Activated naive CD4-positive, alpha-beta T cell treated with anti-CD3 and anti-CD28 coated beads, Interleukin-2, amount 10 ng/mL, durations not matched to agents 7 days and 5 days (primary cell): ENCODE measurements at regions of chr5 and their contacts with region 1.

Region 1: DNA sequence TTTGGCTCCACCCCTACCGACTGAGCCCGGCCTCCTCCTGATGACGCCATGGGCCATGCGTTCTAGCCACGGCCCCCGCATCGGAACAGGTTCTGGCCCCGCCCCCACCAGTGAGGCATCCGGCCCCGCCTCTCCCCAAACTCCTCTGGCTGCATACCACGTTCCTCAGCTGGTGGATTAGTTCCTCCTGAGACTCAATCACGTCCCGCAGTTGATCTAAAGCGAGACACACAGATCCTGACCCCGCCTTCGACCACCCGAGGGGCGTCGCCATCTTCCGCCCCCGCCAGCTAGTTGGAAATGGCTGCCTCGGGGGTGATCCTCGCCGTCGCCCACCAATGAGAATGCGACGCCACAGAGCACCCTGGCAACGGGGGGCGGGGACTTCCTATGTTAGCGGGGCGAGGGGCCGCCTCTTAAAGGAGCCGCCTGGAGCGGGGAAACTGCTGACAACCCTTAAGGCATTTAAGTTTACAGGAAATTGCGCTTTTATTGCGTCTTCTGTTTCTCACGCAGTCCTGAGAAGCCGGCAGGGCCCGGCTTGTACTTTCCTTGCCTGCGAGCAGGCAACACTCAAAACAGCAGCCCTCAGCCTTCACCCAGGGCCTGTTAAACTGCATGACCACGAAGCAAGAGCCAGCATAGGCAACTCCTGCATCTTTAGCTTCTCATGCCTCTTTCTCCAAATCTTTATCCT is at the start of gene SPATA24:
- DNase-seq: peak; percentile 99
- H3K4me3 Mint-ChIP-seq: peak within 1 kb of the TSS; percentile 85
- H3K27ac Mint-ChIP-seq: peak within 1 kb of the TSS; percentile 98
- H3K4me1 Mint-ChIP-seq: peaks cover 40% of the 10 kb centered on the region
- H3K27me3 Mint-ChIP-seq: no peaks in the 10 kb centered on the region

Region 2: DNA sequence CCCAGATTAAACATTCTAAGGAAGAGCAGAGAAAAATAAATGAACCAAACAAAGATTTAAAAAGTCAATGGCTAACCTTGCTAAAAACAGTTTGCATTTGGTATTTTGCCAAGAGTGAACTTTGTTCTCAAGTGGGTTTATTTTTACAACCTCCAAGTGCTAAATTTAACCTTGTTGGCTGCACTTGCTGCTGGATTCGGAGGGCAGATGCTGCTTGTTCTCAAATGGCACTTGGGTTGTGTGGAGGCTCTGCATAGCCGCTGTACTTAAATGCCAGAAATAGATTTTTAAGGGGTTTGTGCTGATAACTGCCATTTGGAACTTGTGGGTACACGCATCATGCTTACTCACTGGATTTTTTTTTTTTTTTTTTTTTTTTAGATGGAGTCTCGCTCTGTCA is 13.3 kb after region 1 on chr5:
- CTCF ChIA-PET with region 1: interaction called, 22 read pairs
- DNase-seq: peak; percentile 20
- H3K4me3 Mint-ChIP-seq: no peak overlapping the region
- H3K27ac Mint-ChIP-seq: no peak overlapping the region
- H3K4me1 Mint-ChIP-seq: peaks cover 60% of the 10 kb centered on the region
- H3K27me3 Mint-ChIP-seq: no peaks in the 10 kb centered on the region